PC-9 (cell line): ENCODE measurements at regions of chr1 and their contacts with region 1.

Region 1: GRCh38 chr1:169601093-169601881 is 15.0 kb upstream of the F5 start:
- DNase-seq: no peak
- H3K4me3 ChIP-seq: no peak overlapping the region
- H3K27ac ChIP-seq: no peak overlapping the region
- H3K4me1 ChIP-seq: no peaks in the 10 kb centered on the region
- H3K27me3 ChIP-seq: no peaks in the 10 kb centered on the region
- CTCF ChIP-seq: peak; percentile 76

Region 2: GRCh38 chr1:169473352-169473751 is 127.9 kb before region 1 on chr1:
- CTCF ChIA-PET with region 1: no interaction called
- POLR2A ChIA-PET with region 1: interaction called, 24 read pairs
- intact Hi-C with region 1: no loop called
- DNase-seq: no peak
- H3K4me3 ChIP-seq: no peak overlapping the region
- H3K27ac ChIP-seq: no peak overlapping the region
- H3K4me1 ChIP-seq: no peaks in the 10 kb centered on the region
- H3K27me3 ChIP-seq: no peaks in the 10 kb centered on the region
- CTCF ChIP-seq: no peak

Region 3: DNA sequence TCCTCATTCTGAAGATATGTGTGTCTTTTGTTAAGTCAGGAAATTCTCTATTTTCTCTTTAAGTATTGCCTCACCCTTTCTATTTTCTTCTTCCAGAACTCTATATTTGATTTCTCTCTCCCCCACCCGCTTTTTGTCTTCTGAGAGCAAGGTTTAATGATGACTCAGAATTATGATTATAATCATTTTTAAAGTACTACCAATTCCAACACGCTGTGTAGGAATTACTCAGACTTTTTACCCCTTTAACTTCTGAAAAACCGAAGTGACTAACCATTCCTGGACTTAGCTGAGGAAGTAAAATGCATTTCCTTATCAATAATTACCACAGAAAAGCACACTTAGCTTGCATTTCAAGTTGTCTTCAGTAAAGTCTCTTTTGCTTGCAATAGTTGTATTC is 313.2 kb after region 1 on chr1:
- CTCF ChIA-PET with region 1: no interaction called
- POLR2A ChIA-PET with region 1: no interaction called
- intact Hi-C with region 1: no loop called
- DNase-seq: peak in 1 of 2 experiments; percentile 50
- H3K4me3 ChIP-seq: no peak overlapping the region
- H3K27ac ChIP-seq: no peak overlapping the region
- H3K4me1 ChIP-seq: peaks cover 9% of the 10 kb centered on the region; the same call in 1 of the 2 replicates
- H3K27me3 ChIP-seq: no peaks in the 10 kb centered on the region
- CTCF ChIP-seq: no peak